Activated naive CD4-positive, alpha-beta T cell treated with anti-CD3 and anti-CD28 coated beads, Interleukin-2, amount 10 ng/mL, durations not matched to agents 7 days and 5 days (primary cell): ENCODE measurements at regions of chr1 and their contacts with region 1.

Region 1: GRCh38 chr1:31789259-31790065 is 25.3 kb upstream of the ADGRB2 start:
- DNase-seq: peak; percentile 98
- H3K4me3 Mint-ChIP-seq: peak overlapping the region; percentile 83
- H3K27ac Mint-ChIP-seq: no peak overlapping the region
- H3K4me1 Mint-ChIP-seq: peaks cover 13% of the 10 kb centered on the region
- H3K27me3 Mint-ChIP-seq: peaks cover 49% of the 10 kb centered on the region

Region 2: DNA sequence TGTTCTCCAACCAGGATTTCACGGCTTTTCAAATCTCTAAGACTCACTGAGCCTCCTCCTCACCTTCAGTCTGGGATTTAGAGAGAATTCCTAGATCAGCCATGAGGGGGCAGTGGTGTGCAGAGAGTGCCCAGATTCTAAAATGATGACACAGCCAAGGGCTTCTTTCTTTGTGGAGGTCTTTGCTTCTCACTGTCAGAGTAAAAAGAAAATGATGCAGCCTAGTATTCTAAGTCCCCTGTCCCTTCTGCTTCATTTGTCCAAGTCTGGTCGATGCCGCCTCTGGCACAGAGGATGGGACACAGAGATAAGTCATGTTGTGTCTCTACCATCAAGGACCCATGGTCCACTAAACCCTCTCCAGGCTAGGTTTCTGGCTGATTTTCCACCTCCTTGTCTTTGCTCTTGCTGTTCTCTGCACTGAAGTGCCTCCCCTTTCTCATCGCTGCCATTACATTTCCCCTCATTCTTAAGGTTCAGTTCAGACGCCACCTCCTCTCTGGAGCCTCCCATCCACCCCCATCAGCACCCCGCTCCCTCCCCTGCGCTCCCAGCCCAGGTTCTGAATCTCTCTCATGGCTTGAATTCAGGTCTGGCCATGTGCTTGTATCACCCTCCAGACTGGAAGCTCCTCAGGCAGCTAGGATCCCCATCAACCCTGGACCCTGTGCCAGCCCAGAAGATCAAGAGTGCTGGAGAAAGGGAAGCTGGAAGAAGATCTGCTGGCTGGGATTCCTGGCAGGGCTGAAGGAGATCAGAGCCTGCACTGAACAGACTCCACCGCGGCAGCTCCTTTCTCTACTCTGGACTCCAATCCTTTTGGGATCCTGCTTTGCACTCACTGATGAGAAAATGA is 225.1 kb before region 1 on chr1:
- CTCF ChIA-PET with region 1: interaction called, 30 read pairs
- DNase-seq: peak; percentile 65
- H3K4me3 Mint-ChIP-seq: no peak overlapping the region
- H3K27ac Mint-ChIP-seq: no peak overlapping the region
- H3K4me1 Mint-ChIP-seq: no peaks in the 10 kb centered on the region
- H3K27me3 Mint-ChIP-seq: peaks cover 38% of the 10 kb centered on the region

Region 3: DNA sequence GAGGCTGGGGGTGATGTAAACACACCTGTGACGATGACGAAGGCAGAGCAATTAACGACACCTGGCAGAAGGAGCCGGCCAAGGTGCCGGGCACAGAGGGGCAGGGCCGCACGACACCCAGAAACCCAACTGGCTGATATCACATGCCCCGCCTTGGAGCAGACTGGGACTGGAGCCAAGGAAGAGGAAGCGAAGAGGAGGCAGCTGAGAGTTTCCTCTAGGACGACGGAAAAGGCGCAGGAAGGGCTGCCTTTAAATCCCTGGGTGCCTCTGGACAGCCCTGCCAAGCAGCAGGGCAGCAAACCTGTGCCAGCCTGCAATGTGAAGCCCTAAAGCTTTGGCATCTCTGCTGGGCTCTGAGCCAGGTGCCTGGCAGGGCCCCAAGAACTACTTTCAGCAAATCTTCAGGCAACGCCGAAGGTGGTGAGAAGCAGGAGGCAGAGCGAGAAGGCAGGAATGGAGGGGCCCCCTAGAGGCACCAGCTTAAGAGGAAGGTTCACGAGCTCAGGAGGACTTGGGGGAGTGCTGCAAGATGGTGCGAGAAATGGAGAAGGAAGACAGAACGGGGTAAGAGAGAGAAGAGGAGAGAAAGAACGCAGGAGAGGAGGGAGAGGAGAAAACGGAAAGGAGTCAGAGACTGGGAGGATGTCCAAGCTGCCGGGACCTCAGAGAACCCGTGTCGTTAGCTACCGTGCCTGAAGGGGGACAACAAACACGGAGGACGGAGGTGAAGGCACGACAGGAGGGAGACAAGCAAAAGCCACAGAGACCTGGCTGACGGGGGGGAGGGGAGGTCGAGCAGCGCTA is 119.5 kb before region 1 on chr1:
- CTCF ChIA-PET with region 1: interaction called, 48 read pairs
- DNase-seq: peak; percentile 29
- H3K4me3 Mint-ChIP-seq: no peak overlapping the region
- H3K27ac Mint-ChIP-seq: peak overlapping the region; percentile 55
- H3K4me1 Mint-ChIP-seq: peaks cover 7% of the 10 kb centered on the region
- H3K27me3 Mint-ChIP-seq: peaks cover 56% of the 10 kb centered on the region

Region 4: GRCh38 chr1:31760471-31761470 is 28.7 kb before region 1 on chr1:
- CTCF ChIA-PET with region 1: interaction called, 13 read pairs
- DNase-seq: peak; percentile 80
- H3K4me3 Mint-ChIP-seq: peak overlapping the region; percentile 60
- H3K27ac Mint-ChIP-seq: no peak overlapping the region
- H3K4me1 Mint-ChIP-seq: peaks cover 28% of the 10 kb centered on the region
- H3K27me3 Mint-ChIP-seq: peaks cover 76% of the 10 kb centered on the region